Caco-2 (cell line): ENCODE measurements at regions of chr13 and their contacts with region 1.

Region 1: GRCh38 chr13:99436686-99437416 is 64.4 kb upstream of the TM9SF2 start:
- DNase-seq: peak; percentile 80 to 86
- H3K4me3 ChIP-seq: no peak overlapping the region
- H3K4me3 Mint-ChIP-seq: peak overlapping the region; percentile 49
- H3K27ac Mint-ChIP-seq: no peak overlapping the region
- H3K4me1 ChIP-seq: 0 out of 2 replicates have a peak, but pooled peaks cover 5% of the 10 kb centered on the region
- H3K4me1 Mint-ChIP-seq: peaks cover 8% of the 10 kb centered on the region
- H3K27me3 ChIP-seq: no peaks in the 10 kb centered on the region
- H3K27me3 Mint-ChIP-seq: peaks cover 5% of the 10 kb centered on the region
- CTCF ChIP-seq: peak; percentile 99 to 100

Region 2: GRCh38 chr13:99176309-99177276 is 260.3 kb before region 1 on chr13:
- CTCF ChIA-PET with region 1: interaction called, 6 read pairs
- POLR2A ChIA-PET with region 1: no interaction called
- intact Hi-C with region 1: loop called (anchors 1 kb)
- DNase-seq: peak; percentile 83 to 90
- H3K4me3 ChIP-seq: no peak overlapping the region
- H3K4me3 Mint-ChIP-seq: no peak overlapping the region
- H3K27ac Mint-ChIP-seq: no peak overlapping the region
- H3K4me1 ChIP-seq: peaks cover 5% of the 10 kb centered on the region; the same call in 1 of the 2 replicates
- H3K4me1 Mint-ChIP-seq: no peaks in the 10 kb centered on the region
- H3K27me3 ChIP-seq: no peaks in the 10 kb centered on the region
- H3K27me3 Mint-ChIP-seq: no peaks in the 10 kb centered on the region
- CTCF ChIP-seq: peak; percentile 96

Region 3: DNA sequence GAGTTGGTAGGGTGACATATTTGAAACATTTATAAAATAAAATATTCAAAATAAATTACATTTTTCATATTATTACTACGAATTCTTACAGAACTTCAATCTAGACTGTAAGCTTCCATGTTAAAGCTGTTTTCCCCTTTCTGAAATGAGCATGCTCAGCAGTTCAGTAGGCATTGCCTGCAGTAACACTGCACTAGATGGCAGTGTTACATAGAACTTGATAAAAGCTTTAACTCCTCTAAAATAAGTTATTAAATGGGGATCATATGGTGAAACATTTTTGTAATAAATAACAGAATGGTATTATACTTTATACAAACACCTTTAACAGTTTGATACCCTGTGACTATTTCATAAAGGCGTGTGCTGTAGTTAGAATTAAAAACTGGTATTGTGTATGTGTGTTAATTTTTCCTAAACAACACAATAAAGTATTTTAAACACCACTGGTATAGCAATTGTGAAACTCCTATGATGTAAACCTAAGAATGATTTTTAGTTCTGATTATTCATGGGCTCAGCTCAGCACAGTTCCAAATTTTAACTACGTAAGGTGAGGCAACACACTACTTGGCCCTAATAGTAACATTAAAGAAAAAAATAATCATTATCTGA is 167.1 kb before region 1 on chr13:
- CTCF ChIA-PET with region 1: interaction called, 8 read pairs
- POLR2A ChIA-PET with region 1: no interaction called
- intact Hi-C with region 1: loop called (anchors 1 kb)
- DNase-seq: peak in 1 of 2 experiments; percentile 15
- H3K4me3 ChIP-seq: no peak overlapping the region
- H3K4me3 Mint-ChIP-seq: no peak overlapping the region
- H3K27ac Mint-ChIP-seq: no peak overlapping the region
- H3K4me1 ChIP-seq: no peaks in the 10 kb centered on the region
- H3K4me1 Mint-ChIP-seq: no peaks in the 10 kb centered on the region
- H3K27me3 ChIP-seq: no peaks in the 10 kb centered on the region
- H3K27me3 Mint-ChIP-seq: no peaks in the 10 kb centered on the region
- CTCF ChIP-seq: peak in 1 of 2 experiments; percentile 58

Region 4: GRCh38 chr13:99296398-99296797 is 140.5 kb before region 1 on chr13:
- CTCF ChIA-PET with region 1: no interaction called
- POLR2A ChIA-PET with region 1: no interaction called
- intact Hi-C with region 1: loop called (anchors 10 kb)
- DNase-seq: no peak
- H3K4me3 ChIP-seq: no peak overlapping the region
- H3K4me3 Mint-ChIP-seq: no peak overlapping the region
- H3K27ac Mint-ChIP-seq: no peak overlapping the region
- H3K4me1 ChIP-seq: no peaks in the 10 kb centered on the region
- H3K4me1 Mint-ChIP-seq: peaks cover 24% of the 10 kb centered on the region
- H3K27me3 ChIP-seq: no peaks in the 10 kb centered on the region
- H3K27me3 Mint-ChIP-seq: no peaks in the 10 kb centered on the region
- CTCF ChIP-seq: no peak

Region 5: DNA sequence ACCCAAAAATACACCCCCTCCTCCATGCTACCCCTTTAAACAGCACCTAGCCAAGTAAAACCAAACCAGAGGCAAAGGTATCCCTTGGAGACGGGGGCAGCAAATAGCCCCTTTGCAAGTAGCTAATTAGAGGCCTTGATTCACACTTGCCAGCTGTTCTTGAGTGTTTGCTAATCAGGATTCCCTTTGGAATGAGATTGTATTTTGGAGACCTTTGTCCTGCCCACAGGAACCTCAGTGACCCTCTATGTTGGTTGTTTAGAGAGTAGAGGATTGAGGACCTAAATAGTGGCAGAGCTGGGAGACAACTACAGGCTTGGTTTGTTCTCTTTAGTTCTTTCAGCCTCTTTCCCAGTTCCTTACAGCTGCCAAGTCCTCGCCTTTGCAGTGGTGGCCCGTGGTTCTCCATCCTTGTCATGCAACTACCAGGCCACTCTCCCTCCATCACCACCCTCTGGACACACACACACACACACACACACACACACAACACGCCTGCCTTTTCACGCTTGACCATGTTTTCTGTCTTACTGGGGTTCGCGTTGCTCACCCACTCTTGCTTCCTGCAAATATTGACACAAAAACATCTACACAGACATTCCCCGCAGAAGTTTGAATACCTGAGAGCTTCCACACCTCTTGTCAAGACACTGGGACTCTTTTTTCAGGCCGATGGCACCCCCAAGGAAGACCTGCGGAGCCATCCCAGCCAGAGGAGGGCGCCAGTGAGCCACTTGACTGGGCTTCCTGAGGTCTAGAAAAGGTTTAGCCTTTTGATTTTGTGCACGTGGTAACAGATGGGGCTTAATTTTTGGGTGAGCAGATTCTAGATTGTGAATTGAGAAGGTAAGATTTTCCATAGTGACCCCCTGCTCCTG is 49.7 kb before region 1 on chr13:
- CTCF ChIA-PET with region 1: interaction called, 3 read pairs
- POLR2A ChIA-PET with region 1: no interaction called
- intact Hi-C with region 1: loop called (anchors 1 kb)
- DNase-seq: peak; percentile 58 to 70
- H3K4me3 ChIP-seq: no peak overlapping the region
- H3K4me3 Mint-ChIP-seq: no peak overlapping the region
- H3K27ac Mint-ChIP-seq: no peak overlapping the region
- H3K4me1 ChIP-seq: no peaks in the 10 kb centered on the region
- H3K4me1 Mint-ChIP-seq: no peaks in the 10 kb centered on the region
- H3K27me3 ChIP-seq: no peaks in the 10 kb centered on the region
- H3K27me3 Mint-ChIP-seq: no peaks in the 10 kb centered on the region
- CTCF ChIP-seq: peak; percentile 72 to 77